HepG2 (cell line): ENCODE measurements at regions of chr4 and their contacts with region 1.

Region 1: DNA sequence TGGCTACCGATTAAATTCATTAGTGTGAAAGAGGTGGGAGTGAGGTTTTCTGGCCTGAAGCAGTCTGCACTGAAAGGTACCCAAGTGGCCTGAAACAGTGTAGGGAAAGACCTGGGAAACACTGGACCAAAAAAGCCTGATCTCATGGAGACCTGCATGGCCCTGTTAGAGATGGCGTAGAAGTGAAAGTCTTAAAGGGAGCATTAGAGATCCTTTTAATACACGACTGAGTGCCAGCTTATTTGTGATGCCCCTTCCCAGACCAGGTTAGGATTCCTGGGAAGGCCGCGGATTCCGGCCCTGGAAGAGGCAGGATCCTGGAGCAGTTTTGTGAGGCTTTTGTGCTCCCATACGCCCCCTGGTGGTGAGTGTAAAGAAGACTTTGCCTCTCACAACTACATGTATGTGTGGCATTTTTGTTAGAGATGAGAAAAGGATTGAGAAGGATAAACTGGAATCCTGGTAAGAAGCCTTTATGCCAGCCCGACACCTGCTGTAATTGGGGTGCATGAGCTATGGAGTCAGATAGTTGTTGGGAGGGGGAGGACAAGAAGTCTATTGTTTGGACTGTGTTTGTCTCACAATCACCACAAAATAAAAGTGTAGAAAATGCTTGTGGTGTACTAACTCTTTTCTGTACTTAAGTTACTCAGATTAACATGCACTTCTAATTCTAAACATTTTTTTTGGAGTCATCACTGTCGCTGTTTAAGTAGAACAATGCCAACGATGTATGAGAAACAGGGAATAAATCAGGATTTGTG is 54.0 kb downstream of the JADE1 start:
- DNase-seq: peak; percentile 69
- ATAC-seq: peak; percentile 85
- H3K4me3 ChIP-seq: no peak overlapping the region
- H3K27ac ChIP-seq: no peak overlapping the region
- H3K4me1 ChIP-seq: peaks cover 18% of the 10 kb centered on the region
- H3K27me3 ChIP-seq: no peaks in the 10 kb centered on the region
- CTCF ChIP-seq: peak; percentile 81
- EP300 ChIP-seq: no peak
- POLR2A ChIP-seq: no peak
- RAD21 ChIP-seq: peak; percentile 70

Region 2: GRCh38 chr4:128454281-128455075 is 409.0 kb before region 1 on chr4:
- CTCF ChIA-PET with region 1: no interaction called
- POLR2A ChIA-PET with region 1: no interaction called
- in situ Hi-C with region 1: no loop called
- intact Hi-C with region 1: loop called (anchors 1 kb)
- DNase-seq: peak; percentile 67
- ATAC-seq: peak; percentile 99
- H3K4me3 ChIP-seq: no peak overlapping the region
- H3K27ac ChIP-seq: no peak overlapping the region
- H3K4me1 ChIP-seq: no peaks in the 10 kb centered on the region
- H3K27me3 ChIP-seq: no peaks in the 10 kb centered on the region
- CTCF ChIP-seq: peak; percentile 82
- EP300 ChIP-seq: no peak
- POLR2A ChIP-seq: no peak
- RAD21 ChIP-seq: peak; percentile 66

Region 3: GRCh38 chr4:128565565-128566186 is 297.8 kb before region 1 on chr4:
- CTCF ChIA-PET with region 1: interaction called, 16 read pairs
- POLR2A ChIA-PET with region 1: no interaction called
- in situ Hi-C with region 1: loop called (anchors 5 kb)
- intact Hi-C with region 1: loop called (anchors 1 kb)
- DNase-seq: peak; percentile 51
- ATAC-seq: peak; percentile 99
- H3K4me3 ChIP-seq: no peak overlapping the region
- H3K27ac ChIP-seq: no peak overlapping the region
- H3K4me1 ChIP-seq: peaks cover 8% of the 10 kb centered on the region; the same call in 1 of the 2 replicates
- H3K27me3 ChIP-seq: no peaks in the 10 kb centered on the region; a peak in 1 of 5 replicates
- CTCF ChIP-seq: peak; percentile 82
- EP300 ChIP-seq: no peak
- POLR2A ChIP-seq: no peak
- RAD21 ChIP-seq: peak; percentile 82

Region 4: GRCh38 chr4:128574706-128575105 is 288.8 kb before region 1 on chr4:
- CTCF ChIA-PET with region 1: interaction called, 8 read pairs
- POLR2A ChIA-PET with region 1: no interaction called
- in situ Hi-C with region 1: loop called (anchors 5 kb)
- intact Hi-C with region 1: loop called (anchors 2 kb)
- DNase-seq: peak; percentile 32
- ATAC-seq: peak; percentile 86
- H3K4me3 ChIP-seq: no peak overlapping the region
- H3K27ac ChIP-seq: no peak overlapping the region
- H3K4me1 ChIP-seq: peaks cover 21% of the 10 kb centered on the region
- H3K27me3 ChIP-seq: no peaks in the 10 kb centered on the region; a peak in 1 of 5 replicates
- CTCF ChIP-seq: peak; percentile 65
- EP300 ChIP-seq: no peak
- POLR2A ChIP-seq: no peak
- RAD21 ChIP-seq: peak; percentile 32; the same call in 1 of the 2 replicates

Region 5: DNA sequence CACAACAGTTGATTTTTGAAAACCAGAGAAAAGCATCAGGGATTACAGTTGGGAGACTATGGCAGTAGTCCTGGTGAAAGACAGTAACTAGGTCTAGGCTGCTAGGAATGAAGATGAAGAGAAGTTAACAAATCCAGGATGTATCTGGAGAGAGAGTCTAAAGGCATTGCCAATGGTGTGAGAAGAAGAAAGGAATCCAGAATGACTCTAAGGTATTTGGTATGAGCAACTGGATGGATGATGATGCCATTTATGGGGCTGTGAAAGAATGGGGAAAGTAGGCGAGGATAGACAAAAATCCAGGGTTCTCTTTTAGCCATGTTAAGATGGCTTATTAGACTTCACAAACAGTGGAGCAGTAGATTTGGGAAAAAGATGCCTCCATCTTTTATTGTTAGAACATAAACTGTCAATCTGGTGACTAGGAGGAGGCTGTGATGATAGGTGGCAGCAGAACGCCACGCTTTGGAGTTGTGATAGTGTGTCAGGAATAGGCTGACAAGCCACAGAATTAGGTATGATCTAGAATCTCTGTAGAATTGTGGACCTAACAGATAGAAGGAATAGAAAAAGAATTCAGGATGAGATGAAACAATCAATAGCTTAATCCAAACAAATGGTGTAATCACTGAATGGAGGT is 81.3 kb before region 1 on chr4:
- CTCF ChIA-PET with region 1: interaction called, 20 read pairs
- POLR2A ChIA-PET with region 1: no interaction called
- in situ Hi-C with region 1: no loop called
- intact Hi-C with region 1: loop called (anchors 1 kb)
- DNase-seq: peak; percentile 28
- ATAC-seq: peak; percentile 91
- H3K4me3 ChIP-seq: no peak overlapping the region
- H3K27ac ChIP-seq: no peak overlapping the region
- H3K4me1 ChIP-seq: no peaks in the 10 kb centered on the region
- H3K27me3 ChIP-seq: no peaks in the 10 kb centered on the region
- CTCF ChIP-seq: peak; percentile 65
- EP300 ChIP-seq: no peak
- POLR2A ChIP-seq: no peak
- RAD21 ChIP-seq: 0 out of 2 replicates have a peak, but pooled peaks have one; percentile 16

Region 6: GRCh38 chr4:128930051-128930450 is 66.6 kb after region 1 on chr4:
- CTCF ChIA-PET with region 1: no interaction called
- POLR2A ChIA-PET with region 1: no interaction called
- in situ Hi-C with region 1: no loop called
- intact Hi-C with region 1: no loop called
- DNase-seq: no peak
- ATAC-seq: no peak
- H3K4me3 ChIP-seq: no peak overlapping the region
- H3K27ac ChIP-seq: no peak overlapping the region
- H3K4me1 ChIP-seq: no peaks in the 10 kb centered on the region
- H3K27me3 ChIP-seq: no peaks in the 10 kb centered on the region
- CTCF ChIP-seq: no peak
- EP300 ChIP-seq: no peak
- POLR2A ChIP-seq: no peak
- RAD21 ChIP-seq: no peak

Region 7: DNA sequence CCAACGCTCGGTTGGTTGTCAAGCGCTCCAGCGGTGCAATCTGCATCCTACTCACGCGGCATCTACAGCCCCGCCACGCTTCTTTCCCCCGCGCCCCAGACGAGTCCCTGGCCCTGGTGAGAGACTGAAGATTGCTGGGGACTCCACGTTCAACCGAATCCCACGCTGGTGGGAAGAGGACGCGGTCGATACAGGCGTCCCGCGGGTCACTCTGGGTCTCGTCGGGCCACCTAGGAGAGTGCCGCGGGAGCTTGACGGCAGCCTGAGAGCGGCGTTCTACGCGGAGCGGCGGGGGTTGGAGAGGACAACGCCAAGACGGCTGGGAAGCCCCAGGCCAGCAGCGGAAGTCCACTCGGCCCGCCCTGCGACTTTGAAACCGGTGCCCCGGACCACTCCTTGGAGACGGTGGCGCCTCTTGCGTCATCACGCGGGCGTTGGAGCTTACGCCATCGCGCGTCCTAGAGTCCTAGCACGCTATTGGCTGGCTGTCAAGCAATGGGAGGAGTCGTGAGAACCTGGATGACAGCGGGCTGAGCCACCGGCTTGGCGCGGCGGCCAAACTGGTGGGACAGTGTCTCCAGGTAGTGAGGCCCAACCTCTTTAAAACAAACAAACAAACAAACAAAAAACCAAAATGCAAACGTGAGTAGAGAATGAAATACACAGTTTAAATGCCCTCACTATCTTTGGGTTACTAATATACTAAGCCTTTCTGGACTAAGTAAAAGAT is 229.9 kb after region 1 on chr4 and contains the start of gene SCLT1:
- CTCF ChIA-PET with region 1: no interaction called
- POLR2A ChIA-PET with region 1: no interaction called
- in situ Hi-C with region 1: no loop called
- intact Hi-C with region 1: loop called (anchors 10 kb)
- DNase-seq: peak; percentile 92
- ATAC-seq: peak; percentile 97
- H3K4me3 ChIP-seq: peak within 1 kb of the TSS; percentile 70 to 94 (median 81)
- H3K27ac ChIP-seq: peak within 1 kb of the TSS; percentile 79
- H3K4me1 ChIP-seq: peaks cover 48% of the 10 kb centered on the region
- H3K27me3 ChIP-seq: no peaks in the 10 kb centered on the region; a peak in 1 of 5 replicates
- CTCF ChIP-seq: no peak
- EP300 ChIP-seq: no peak
- POLR2A ChIP-seq: peak; percentile 63 to 77
- RAD21 ChIP-seq: peak; percentile 43; the same call in 1 of the 2 replicates
- total RNA-seq, gene SCLT1: 8.0 and 8.7 TPM in 2 replicates